ENCODE measurements at regions of chr10 and their contacts with region 1.

Region 1: DNA sequence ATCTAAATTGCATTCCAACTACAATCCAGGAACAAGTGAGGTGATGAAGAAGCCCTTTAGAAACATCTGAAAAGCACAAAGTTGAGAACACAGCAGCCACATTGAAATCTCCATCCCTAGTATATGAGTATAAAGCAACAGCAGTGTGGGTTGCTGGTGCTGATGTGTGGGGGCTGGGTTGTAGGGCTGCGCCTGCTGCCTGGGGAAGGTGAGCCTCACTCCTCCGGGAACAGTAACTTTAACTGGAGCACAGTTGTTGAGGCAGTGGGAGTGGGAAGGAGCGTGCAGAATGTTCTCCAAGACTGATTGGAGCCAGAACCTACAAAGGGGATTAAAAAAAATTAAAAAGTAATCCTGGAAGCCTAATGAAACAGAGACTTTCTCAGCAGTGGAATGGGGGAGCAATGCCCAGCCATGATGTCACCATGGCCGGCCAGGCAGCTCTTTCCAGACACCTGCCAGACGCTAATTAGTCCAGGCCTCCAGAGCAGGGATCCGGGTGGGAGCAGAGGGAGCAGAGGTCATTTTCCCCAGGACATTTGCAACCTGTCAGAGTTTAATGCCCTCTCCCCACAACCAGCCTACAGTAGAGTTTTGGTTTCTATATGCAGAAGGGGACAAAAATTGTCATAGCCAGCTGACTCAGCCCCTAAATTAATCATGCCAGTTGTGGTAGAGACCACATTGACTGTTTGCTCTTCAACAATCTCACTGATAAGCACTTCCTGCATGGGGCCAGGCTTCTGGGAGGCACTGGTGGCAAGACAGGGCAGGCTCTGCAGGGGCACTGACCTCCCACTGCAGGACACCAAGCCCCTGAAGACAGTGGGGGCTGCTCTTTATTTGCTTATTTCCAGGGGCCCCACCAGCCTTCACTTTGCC is 133.0 kb upstream of the ZNF32 start:
- DNase-seq: peak; percentile 65
- H3K4me3 Mint-ChIP-seq: no peak overlapping the region
- H3K27ac Mint-ChIP-seq: no peak overlapping the region
- H3K4me1 Mint-ChIP-seq: peaks cover 19% of the 10 kb centered on the region
- H3K27me3 Mint-ChIP-seq: no peaks in the 10 kb centered on the region

Region 2: DNA sequence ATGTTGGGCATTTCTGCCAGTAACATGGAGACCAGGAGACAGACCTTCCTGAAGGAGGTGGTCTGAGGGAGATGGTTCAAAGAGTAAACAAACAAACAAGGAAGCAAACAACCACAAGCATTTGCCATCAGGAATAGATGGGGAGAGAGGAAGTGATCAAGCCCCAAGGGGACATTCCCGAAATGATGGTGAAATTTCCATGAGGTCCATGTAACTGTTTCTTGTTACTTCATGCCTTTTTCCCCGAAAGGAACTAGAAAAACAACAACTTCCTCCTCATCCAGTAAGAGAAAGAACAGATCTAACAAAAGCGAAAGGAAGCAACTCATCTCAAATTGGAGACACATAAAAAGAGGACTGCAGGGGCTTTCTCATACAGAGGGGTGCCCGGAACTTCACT is 19.4 kb after region 1 on chr10:
- CTCF ChIA-PET with region 1: no interaction called
- POLR2A ChIA-PET with region 1: no interaction called
- intact Hi-C with region 1: loop called (anchors 2 kb)
- DNase-seq: no peak
- H3K4me3 Mint-ChIP-seq: no peak overlapping the region
- H3K27ac Mint-ChIP-seq: no peak overlapping the region
- H3K4me1 Mint-ChIP-seq: peaks cover 7% of the 10 kb centered on the region
- H3K27me3 Mint-ChIP-seq: peaks cover 6% of the 10 kb centered on the region

Region 3: DNA sequence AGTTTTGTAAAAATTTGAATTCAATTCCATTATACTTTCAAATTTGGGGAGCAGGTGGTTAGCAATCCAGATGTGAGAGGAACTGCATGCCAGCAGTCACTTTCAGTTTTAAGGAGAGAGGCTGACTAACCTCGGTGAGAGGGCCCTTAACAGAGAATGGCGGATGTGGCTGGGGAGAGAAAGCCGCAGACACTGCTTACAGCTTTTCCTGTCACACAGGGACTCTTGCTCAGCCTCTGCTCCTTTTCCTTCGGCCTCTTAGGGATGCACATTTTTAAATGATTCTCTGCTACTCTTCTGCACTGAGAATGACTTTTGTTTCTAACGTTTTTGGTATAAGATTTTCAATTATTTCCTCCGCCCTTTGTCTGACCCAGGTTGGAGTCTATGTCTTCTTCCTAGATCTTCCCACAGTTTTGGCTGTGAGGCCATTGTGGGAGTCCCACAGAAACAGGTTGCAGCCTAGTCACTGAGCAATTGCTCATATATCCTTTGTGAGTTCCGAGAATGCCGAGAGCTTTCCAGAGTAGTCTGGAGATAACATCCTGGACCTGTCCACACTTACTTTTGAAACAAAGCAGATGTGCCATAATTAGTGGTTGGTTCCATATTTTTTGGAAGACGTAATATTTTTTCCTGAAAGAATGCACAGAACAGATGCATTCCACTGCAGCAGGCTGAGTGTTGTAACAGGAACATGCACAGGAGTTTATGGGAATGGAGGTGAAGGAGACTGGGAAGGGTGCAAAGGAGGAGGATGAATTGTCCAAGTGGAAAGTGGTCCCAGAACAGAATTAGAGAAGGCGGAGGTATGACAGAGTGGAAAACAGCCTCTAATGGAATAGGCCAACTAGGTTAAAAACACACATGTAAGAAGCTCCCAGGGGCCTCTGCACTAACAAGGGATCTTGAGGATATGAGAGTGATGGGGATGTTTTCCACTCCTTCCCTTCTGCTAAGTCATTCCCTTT is 34.9 kb after region 1 on chr10:
- CTCF ChIA-PET with region 1: no interaction called
- POLR2A ChIA-PET with region 1: no interaction called
- intact Hi-C with region 1: loop called (anchors 2 kb)
- DNase-seq: peak; percentile 90
- H3K4me3 Mint-ChIP-seq: peak overlapping the region; percentile 9
- H3K27ac Mint-ChIP-seq: peak overlapping the region; percentile 53
- H3K4me1 Mint-ChIP-seq: peaks cover 30% of the 10 kb centered on the region
- H3K27me3 Mint-ChIP-seq: no peaks in the 10 kb centered on the region